CD8-positive, alpha-beta T cell (primary cell): ENCODE measurements at regions of chr2 and their contacts with region 1.

Region 1: DNA sequence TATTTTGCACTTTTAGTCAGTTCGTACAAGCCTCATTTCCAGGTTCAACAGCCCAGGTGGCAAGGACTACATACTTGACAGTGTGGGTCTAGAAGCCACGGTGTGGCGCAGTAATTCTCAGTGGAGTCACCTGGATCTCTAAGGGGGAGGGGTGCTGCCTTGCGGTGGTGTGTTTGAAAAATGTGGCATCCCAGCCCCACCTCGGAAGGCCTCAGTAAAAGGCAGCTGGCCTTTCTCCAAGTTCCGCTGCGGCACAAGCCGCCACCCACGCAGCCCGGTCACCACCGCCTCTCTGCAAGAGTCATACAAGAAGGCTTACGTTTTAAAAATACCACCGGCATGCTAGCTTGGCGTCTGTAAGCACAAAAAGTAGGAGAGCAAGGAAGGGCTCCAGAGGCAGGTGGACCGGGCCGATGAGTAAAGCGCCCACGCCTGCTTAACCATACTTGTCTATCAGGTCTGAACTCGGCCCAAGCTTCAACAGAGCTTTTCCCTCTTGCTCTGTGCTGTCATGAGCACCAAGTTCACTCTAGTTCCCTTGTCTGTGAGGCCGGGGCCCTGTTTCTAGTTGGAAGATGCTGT is 49.5 kb downstream of the SPRED2 start:
- DNase-seq: peak; percentile 43 to 86 (median 77)
- ATAC-seq: peak; percentile 95
- H3K4me3 ChIP-seq: no peak overlapping the region
- H3K4me3 Mint-ChIP-seq: peak overlapping the region; percentile 61
- H3K27ac ChIP-seq: no peak overlapping the region
- H3K27ac Mint-ChIP-seq: peak overlapping the region; percentile 67
- H3K4me1 ChIP-seq: peaks cover 21% of the 10 kb centered on the region
- H3K4me1 Mint-ChIP-seq: peaks cover 29% of the 10 kb centered on the region
- H3K27me3 ChIP-seq: no peaks in the 10 kb centered on the region
- H3K27me3 Mint-ChIP-seq: peaks cover 15% of the 10 kb centered on the region
- CTCF ChIP-seq: peak; percentile 21

Region 2: GRCh38 chr2:65453916-65454315 is 71.0 kb after region 1 on chr2:
- CTCF ChIA-PET with region 1: no interaction called
- POLR2A ChIA-PET with region 1: no interaction called
- intact Hi-C with region 1: no loop called
- DNase-seq: no peak
- ATAC-seq: no peak
- H3K4me3 ChIP-seq: no peak overlapping the region
- H3K4me3 Mint-ChIP-seq: no peak overlapping the region
- H3K27ac ChIP-seq: no peak overlapping the region
- H3K27ac Mint-ChIP-seq: no peak overlapping the region
- H3K4me1 ChIP-seq: no peaks in the 10 kb centered on the region
- H3K4me1 Mint-ChIP-seq: no peaks in the 10 kb centered on the region
- H3K27me3 ChIP-seq: no peaks in the 10 kb centered on the region
- H3K27me3 Mint-ChIP-seq: peaks cover 22% of the 10 kb centered on the region
- CTCF ChIP-seq: no peak

Region 3: GRCh38 chr2:65554765-65555591 is 172.1 kb after region 1 on chr2:
- CTCF ChIA-PET with region 1: no interaction called
- POLR2A ChIA-PET with region 1: no interaction called
- intact Hi-C with region 1: loop called (anchors 2 to 5 kb)
- DNase-seq: no peak
- ATAC-seq: no peak
- H3K4me3 ChIP-seq: no peak overlapping the region
- H3K4me3 Mint-ChIP-seq: no peak overlapping the region
- H3K27ac ChIP-seq: no peak overlapping the region
- H3K27ac Mint-ChIP-seq: no peak overlapping the region
- H3K4me1 ChIP-seq: peaks cover 3% of the 10 kb centered on the region
- H3K4me1 Mint-ChIP-seq: peaks cover 4% of the 10 kb centered on the region
- H3K27me3 ChIP-seq: no peaks in the 10 kb centered on the region
- H3K27me3 Mint-ChIP-seq: peaks cover 10% of the 10 kb centered on the region
- CTCF ChIP-seq: no peak

Region 4: DNA sequence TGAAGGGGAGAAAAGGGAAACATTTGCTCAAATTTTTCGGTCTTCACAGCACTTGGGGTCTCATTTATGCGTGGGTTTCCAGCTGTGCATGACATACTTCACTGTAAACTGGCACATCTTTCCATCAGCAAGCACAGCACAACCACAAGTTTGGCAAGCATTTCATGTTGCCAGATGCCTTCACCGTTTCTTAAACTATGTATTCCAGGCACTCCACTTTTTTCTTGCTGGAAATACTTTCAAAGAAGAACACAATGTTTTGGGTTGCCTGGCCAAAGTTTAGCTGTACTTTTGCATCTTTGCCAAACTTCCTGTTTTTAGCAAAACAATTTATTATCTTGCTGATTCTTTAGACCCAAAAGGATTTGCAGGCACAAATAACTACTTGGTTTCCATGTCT is 857.4 kb after region 1 on chr2:
- CTCF ChIA-PET with region 1: no interaction called
- POLR2A ChIA-PET with region 1: no interaction called
- intact Hi-C with region 1: no loop called
- DNase-seq: no peak
- ATAC-seq: no peak
- H3K4me3 ChIP-seq: no peak overlapping the region
- H3K4me3 Mint-ChIP-seq: no peak overlapping the region
- H3K27ac ChIP-seq: no peak overlapping the region
- H3K27ac Mint-ChIP-seq: no peak overlapping the region
- H3K4me1 ChIP-seq: no peaks in the 10 kb centered on the region
- H3K4me1 Mint-ChIP-seq: no peaks in the 10 kb centered on the region
- H3K27me3 ChIP-seq: no peaks in the 10 kb centered on the region
- H3K27me3 Mint-ChIP-seq: peaks cover 1% of the 10 kb centered on the region
- CTCF ChIP-seq: no peak